Right ventricle myocardium inferior (tissue), 1 donor: ENCODE measurements at regions of chr12 and their contacts with region 1.

Region 1: DNA sequence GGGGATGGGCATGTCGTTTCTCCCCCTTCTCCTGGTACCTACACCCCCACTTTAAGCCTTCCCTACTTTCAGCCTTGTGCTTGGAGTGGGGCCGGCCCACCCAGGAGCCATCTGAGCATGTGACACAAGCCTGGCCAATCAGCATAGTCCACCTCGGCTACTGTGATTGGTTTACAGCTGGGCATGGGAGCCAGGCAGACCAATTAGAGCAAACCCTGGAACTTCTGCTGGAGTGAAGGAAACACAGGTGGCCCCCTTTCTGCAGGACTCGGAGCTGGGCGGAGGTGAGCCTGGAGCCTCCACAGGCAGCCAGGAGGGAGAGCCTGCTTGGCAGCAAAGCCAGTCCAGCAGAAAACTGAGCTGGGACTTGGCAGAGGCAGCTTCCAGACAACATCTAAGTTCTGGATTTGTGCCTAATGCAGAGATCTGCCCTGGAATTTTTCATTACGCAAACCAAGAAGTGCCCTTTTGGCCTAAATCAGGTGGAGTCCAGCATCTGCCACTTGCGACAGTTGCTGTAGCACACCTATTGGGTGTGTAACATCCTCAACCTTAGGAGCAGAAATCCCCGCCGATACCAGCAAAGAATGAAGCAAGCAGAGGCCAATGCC is 59.5 kb downstream of the SCARB1 start:
- DNase-seq: no peak
- ATAC-seq: peak; percentile 63

Region 2: GRCh38 chr12:124884587-124885438 is 80.7 kb after region 1 on chr12:
- intact Hi-C with region 1: loop called (anchors 10 kb)
- DNase-seq: no peak
- ATAC-seq: no peak